Ovary (tissue), 10 donors: ENCODE measurements at regions of chr9 and their contacts with region 1.

Region 1: GRCh38 chr9:135156525-135157510 is 69.3 kb downstream of the OLFM1 start:
- DNase-seq: peak; percentile 25 to 67 (median 49)
- H3K4me3 ChIP-seq: no peak overlapping the region
- H3K27ac ChIP-seq: no peak overlapping the region
- H3K4me1 ChIP-seq: no peaks in the 10 kb centered on the region
- H3K27me3 ChIP-seq: no peaks in the 10 kb centered on the region
- CTCF ChIP-seq: no peak
- EP300 ChIP-seq: no peak
- POLR2A ChIP-seq: no peak

Region 2: GRCh38 chr9:135215571-135216161 is 58.8 kb after region 1 on chr9:
- intact Hi-C with region 1: loop called in 1 of 4 experiments (anchors 10 kb)
- DNase-seq: peak in 3 of 5 donors; percentile 42 to 66 (median 60)
- H3K4me3 ChIP-seq: no peak overlapping the region
- H3K27ac ChIP-seq: no peak overlapping the region
- H3K4me1 ChIP-seq: peaks cover 10% of the 10 kb centered on the region
- H3K27me3 ChIP-seq: no peaks in the 10 kb centered on the region
- CTCF ChIP-seq: no peak
- EP300 ChIP-seq: no peak
- POLR2A ChIP-seq: no peak

Region 3: GRCh38 chr9:135294826-135295225 is 138.0 kb after region 1 on chr9:
- intact Hi-C with region 1: no loop called
- DNase-seq: no peak
- H3K4me3 ChIP-seq: no peak overlapping the region
- H3K27ac ChIP-seq: no peak overlapping the region
- H3K4me1 ChIP-seq: no peaks in the 10 kb centered on the region
- H3K27me3 ChIP-seq: no peaks in the 10 kb centered on the region
- CTCF ChIP-seq: no peak
- EP300 ChIP-seq: no peak
- POLR2A ChIP-seq: no peak